SK-N-SH (cell line): ENCODE measurements at regions of chr1 and their contacts with region 1.

Region 1: DNA sequence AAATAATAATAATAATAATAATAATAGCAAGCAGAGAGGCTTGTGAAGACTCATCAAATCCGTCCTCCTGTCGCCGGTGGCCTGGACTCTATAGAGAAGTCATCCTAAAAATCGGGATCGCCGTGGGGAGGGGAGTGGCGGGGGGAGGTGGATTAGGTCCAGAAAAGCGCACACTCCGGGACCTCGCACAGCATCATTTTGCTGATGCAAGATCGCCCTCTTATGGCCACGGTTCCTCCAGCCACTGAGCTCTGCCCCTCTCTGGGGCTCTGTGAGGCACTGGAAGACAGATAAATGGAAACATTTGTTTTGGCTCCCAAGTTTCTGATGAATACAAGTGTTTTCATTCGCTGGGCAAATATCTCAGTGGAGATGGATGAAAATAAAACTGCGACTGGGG is 612.0 kb downstream of the MATN1 start:
- DNase-seq: peak; percentile 76
- H3K4me3 ChIP-seq: no peak overlapping the region
- H3K27ac ChIP-seq: no peak overlapping the region
- H3K4me1 ChIP-seq: peaks cover 0 to 23% of the 10 kb centered on the region in 2 experiments; a peak in 3 of 4 replicates
- H3K27me3 ChIP-seq: no peaks in the 10 kb centered on the region
- CTCF ChIP-seq: peak; percentile 63
- EP300 ChIP-seq: no peak
- RAD21 ChIP-seq: peak; percentile 87

Region 2: GRCh38 chr1:29235955-29236684 is 875.3 kb before region 1 on chr1 and contains the start of gene PTPRU:
- CTCF ChIA-PET with region 1: interaction called, 10 read pairs
- POLR2A ChIA-PET with region 1: no interaction called
- DNase-seq: peak; percentile 98
- H3K4me3 ChIP-seq: peak within 1 kb of the TSS; percentile 49 to 89
- H3K27ac ChIP-seq: peak within 1 kb of the TSS in 1 of 2 experiments; percentile 29; a peak in 1 of 4 replicates
- H3K4me1 ChIP-seq: peaks cover 6 to 37% of the 10 kb centered on the region in 2 experiments; a peak in 2 of 4 replicates
- H3K27me3 ChIP-seq: peaks cover 6% of the 10 kb centered on the region
- CTCF ChIP-seq: peak; percentile 58
- EP300 ChIP-seq: no peak
- RAD21 ChIP-seq: peak; percentile 86
- polyA plus RNA-seq, gene PTPRU: 2.9 and 3.5 TPM in 2 replicates

Region 3: GRCh38 chr1:29858646-29859045 is 252.8 kb before region 1 on chr1:
- CTCF ChIA-PET with region 1: no interaction called
- POLR2A ChIA-PET with region 1: no interaction called
- DNase-seq: no peak
- H3K4me3 ChIP-seq: no peak overlapping the region
- H3K27ac ChIP-seq: no peak overlapping the region
- H3K4me1 ChIP-seq: peaks cover 2% of the 10 kb centered on the region in 2 experiments; a peak in 2 of 4 replicates
- H3K27me3 ChIP-seq: no peaks in the 10 kb centered on the region
- CTCF ChIP-seq: no peak
- EP300 ChIP-seq: no peak
- RAD21 ChIP-seq: no peak

Region 4: GRCh38 chr1:30008998-30009657 is 102.3 kb before region 1 on chr1:
- CTCF ChIA-PET with region 1: no interaction called
- POLR2A ChIA-PET with region 1: no interaction called
- DNase-seq: no peak
- H3K4me3 ChIP-seq: no peak overlapping the region
- H3K27ac ChIP-seq: no peak overlapping the region
- H3K4me1 ChIP-seq: peaks cover 0 to 6% of the 10 kb centered on the region in 2 experiments; a peak in 1 of 4 replicates
- H3K27me3 ChIP-seq: no peaks in the 10 kb centered on the region
- CTCF ChIP-seq: no peak
- EP300 ChIP-seq: no peak
- RAD21 ChIP-seq: no peak

Region 5: DNA sequence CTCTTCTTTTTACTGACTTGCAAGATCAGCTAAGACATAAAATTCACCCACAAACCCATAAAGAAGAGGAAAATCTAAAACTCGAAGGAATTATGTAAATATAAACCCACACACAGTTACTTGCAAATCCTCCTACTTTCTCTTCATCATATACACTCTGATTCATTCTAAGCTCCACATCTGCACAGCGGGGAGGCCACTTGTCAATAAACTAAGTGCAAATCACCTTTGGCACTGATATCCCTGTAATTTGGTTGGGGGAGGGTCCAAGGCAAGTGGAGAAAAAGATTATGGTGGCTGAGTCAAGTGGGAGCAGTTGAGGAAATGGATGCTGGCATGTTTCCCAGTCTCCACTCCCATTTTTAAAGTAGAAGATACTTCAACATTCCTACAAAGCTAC is 15.4 kb after region 1 on chr1:
- CTCF ChIA-PET with region 1: interaction called, 20 read pairs
- POLR2A ChIA-PET with region 1: no interaction called
- DNase-seq: no peak
- H3K4me3 ChIP-seq: no peak overlapping the region
- H3K27ac ChIP-seq: no peak overlapping the region
- H3K4me1 ChIP-seq: no peaks in the 10 kb centered on the region; a peak in 1 of 4 replicates
- H3K27me3 ChIP-seq: no peaks in the 10 kb centered on the region
- CTCF ChIP-seq: no peak
- EP300 ChIP-seq: no peak
- RAD21 ChIP-seq: no peak